Caco-2 (cell line): ENCODE measurements at regions of chr2 and their contacts with region 1.

Region 1: GRCh38 chr2:113080134-113080533 is 12.4 kb downstream of the IL1F10 start:
- DNase-seq: peak in 1 of 2 experiments; percentile 74
- H3K4me3 ChIP-seq: no peak overlapping the region
- H3K4me3 Mint-ChIP-seq: no peak overlapping the region
- H3K27ac Mint-ChIP-seq: no peak overlapping the region
- H3K4me1 ChIP-seq: no peaks in the 10 kb centered on the region
- H3K4me1 Mint-ChIP-seq: no peaks in the 10 kb centered on the region
- H3K27me3 ChIP-seq: no peaks in the 10 kb centered on the region; the same call in 1 of the 2 replicates
- H3K27me3 Mint-ChIP-seq: peaks cover 2% of the 10 kb centered on the region
- CTCF ChIP-seq: peak; percentile 84 to 91

Region 2: DNA sequence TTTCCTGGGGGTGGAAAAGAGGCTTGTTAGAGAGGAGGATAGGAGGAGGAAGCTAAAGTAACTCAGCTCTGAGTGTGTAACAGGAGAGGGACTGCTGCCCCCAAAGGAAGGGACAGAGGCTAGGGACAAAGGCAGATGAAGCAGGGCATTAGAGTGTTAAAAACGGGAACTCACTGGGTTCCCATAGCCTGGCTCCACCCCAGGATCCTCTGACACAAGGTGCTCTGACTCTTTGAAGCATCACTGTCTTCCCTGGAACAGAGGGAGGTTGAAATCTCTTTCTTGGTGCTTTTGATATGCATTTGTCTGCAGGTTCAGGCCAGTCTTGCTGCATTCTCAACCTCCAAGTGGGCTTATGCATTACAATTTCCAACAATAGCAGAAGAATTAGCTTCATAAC is 52.0 kb before region 1 on chr2:
- CTCF ChIA-PET with region 1: no interaction called
- POLR2A ChIA-PET with region 1: no interaction called
- intact Hi-C with region 1: no loop called
- DNase-seq: no peak
- H3K4me3 ChIP-seq: no peak overlapping the region
- H3K4me3 Mint-ChIP-seq: no peak overlapping the region
- H3K27ac Mint-ChIP-seq: no peak overlapping the region
- H3K4me1 ChIP-seq: no peaks in the 10 kb centered on the region
- H3K4me1 Mint-ChIP-seq: no peaks in the 10 kb centered on the region
- H3K27me3 ChIP-seq: peaks cover 5% of the 10 kb centered on the region; the same call in 1 of the 2 replicates
- H3K27me3 Mint-ChIP-seq: peaks cover 28% of the 10 kb centered on the region
- CTCF ChIP-seq: no peak

Region 3: DNA sequence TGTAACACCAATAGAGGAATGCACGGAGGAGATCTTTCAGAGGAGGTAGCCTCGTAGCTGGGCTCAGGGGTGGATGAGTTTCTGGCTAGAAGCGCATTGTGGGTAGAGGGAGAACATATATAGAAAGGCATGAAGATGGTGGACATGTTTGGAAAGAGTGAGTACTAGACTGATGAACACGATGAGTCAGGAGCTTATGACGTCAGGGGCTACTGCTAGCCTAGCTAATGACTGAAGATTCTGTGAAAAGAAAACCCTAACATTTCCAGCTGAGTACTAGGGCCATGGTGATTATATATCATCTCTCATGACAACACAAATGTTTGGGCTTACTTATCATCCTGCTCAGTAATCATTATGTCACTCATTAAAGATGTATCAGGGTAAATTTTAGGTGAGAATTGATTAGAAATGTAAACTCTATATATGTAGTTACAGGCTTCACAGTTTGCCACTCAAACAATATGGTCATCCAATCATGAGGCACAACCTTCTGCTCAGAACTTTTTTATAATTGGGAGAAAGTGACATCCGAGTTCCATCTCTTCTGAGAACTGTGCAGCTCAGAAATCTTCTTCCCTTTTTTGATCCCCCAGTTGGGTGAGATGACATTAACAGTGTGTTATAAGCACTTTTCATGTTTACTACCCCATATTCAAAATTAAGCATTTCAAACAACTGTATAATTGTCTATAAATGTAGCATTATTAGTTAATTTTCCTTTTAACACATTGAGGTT is 25.1 kb after region 1 on chr2:
- CTCF ChIA-PET with region 1: no interaction called
- POLR2A ChIA-PET with region 1: no interaction called
- intact Hi-C with region 1: loop called (anchors 2 kb)
- DNase-seq: no peak
- H3K4me3 ChIP-seq: no peak overlapping the region
- H3K4me3 Mint-ChIP-seq: no peak overlapping the region
- H3K27ac Mint-ChIP-seq: no peak overlapping the region
- H3K4me1 ChIP-seq: peaks cover 5% of the 10 kb centered on the region
- H3K4me1 Mint-ChIP-seq: peaks cover 14% of the 10 kb centered on the region
- H3K27me3 ChIP-seq: no peaks in the 10 kb centered on the region
- H3K27me3 Mint-ChIP-seq: no peaks in the 10 kb centered on the region
- CTCF ChIP-seq: no peak

Region 4: GRCh38 chr2:113157118-113157896 is 77.2 kb after region 1 on chr2:
- CTCF ChIA-PET with region 1: interaction called, 15 read pairs
- POLR2A ChIA-PET with region 1: no interaction called
- intact Hi-C with region 1: no loop called
- DNase-seq: peak; percentile 87 to 88
- H3K4me3 ChIP-seq: peak overlapping the region; percentile 80
- H3K4me3 Mint-ChIP-seq: peak overlapping the region; percentile 75
- H3K27ac Mint-ChIP-seq: peak overlapping the region; percentile 33
- H3K4me1 ChIP-seq: peaks cover 22% of the 10 kb centered on the region
- H3K4me1 Mint-ChIP-seq: peaks cover 5% of the 10 kb centered on the region
- H3K27me3 ChIP-seq: no peaks in the 10 kb centered on the region
- H3K27me3 Mint-ChIP-seq: no peaks in the 10 kb centered on the region
- CTCF ChIP-seq: no peak

Region 5: GRCh38 chr2:113198790-113199612 is 118.9 kb after region 1 on chr2:
- CTCF ChIA-PET with region 1: interaction called, 48 read pairs
- POLR2A ChIA-PET with region 1: no interaction called
- intact Hi-C with region 1: loop called (anchors 1 kb)
- DNase-seq: peak; percentile 90 to 97
- H3K4me3 ChIP-seq: peak overlapping the region; percentile 62
- H3K4me3 Mint-ChIP-seq: peak overlapping the region; percentile 81
- H3K27ac Mint-ChIP-seq: peak overlapping the region; percentile 83
- H3K4me1 ChIP-seq: peaks cover 16% of the 10 kb centered on the region
- H3K4me1 Mint-ChIP-seq: peaks cover 1% of the 10 kb centered on the region
- H3K27me3 ChIP-seq: no peaks in the 10 kb centered on the region
- H3K27me3 Mint-ChIP-seq: no peaks in the 10 kb centered on the region
- CTCF ChIP-seq: peak; percentile 89 to 92

Region 6: GRCh38 chr2:113342650-113343049 is 262.5 kb after region 1 on chr2:
- CTCF ChIA-PET with region 1: no interaction called
- POLR2A ChIA-PET with region 1: no interaction called
- intact Hi-C with region 1: no loop called
- DNase-seq: no peak
- H3K4me3 ChIP-seq: no peak overlapping the region
- H3K4me3 Mint-ChIP-seq: no peak overlapping the region
- H3K27ac Mint-ChIP-seq: no peak overlapping the region
- H3K4me1 ChIP-seq: peaks cover 9% of the 10 kb centered on the region
- H3K4me1 Mint-ChIP-seq: peaks cover 4% of the 10 kb centered on the region
- H3K27me3 ChIP-seq: no peaks in the 10 kb centered on the region
- H3K27me3 Mint-ChIP-seq: no peaks in the 10 kb centered on the region
- CTCF ChIP-seq: no peak

Region 7: DNA sequence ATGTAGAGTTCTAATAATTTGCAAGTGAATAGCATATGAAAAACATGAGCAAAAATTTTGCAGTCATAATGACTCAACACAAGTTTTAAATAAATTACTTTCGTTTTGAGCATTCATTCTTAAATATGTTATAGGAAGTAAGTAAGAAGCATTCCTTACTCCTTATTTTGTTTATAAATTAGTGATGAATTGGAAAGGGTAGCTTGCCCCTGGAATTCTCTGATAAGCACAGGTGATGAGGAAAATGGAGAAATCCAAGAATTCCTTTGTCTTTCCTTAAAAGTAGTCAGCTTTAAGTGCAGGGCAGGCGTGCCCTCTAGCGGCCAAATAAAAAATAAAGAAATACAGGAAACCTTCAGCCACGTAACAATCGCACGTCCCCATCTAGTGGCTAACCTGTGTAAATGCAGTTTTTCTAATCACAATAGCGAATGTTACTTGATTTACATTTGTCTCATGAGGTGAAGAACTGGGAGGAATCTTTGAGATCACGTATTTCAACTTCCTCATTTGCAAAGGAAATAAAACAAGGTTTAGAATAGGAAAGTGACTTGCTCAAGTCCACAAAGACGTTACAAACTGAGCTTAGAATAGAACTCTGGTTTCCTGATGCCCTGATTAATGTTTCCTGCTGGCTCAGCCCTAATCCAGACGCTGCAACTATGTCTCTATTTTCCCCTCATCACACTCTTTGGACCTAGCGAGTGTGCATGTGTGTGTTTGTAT is 310.2 kb after region 1 on chr2:
- CTCF ChIA-PET with region 1: interaction called, 3 read pairs
- POLR2A ChIA-PET with region 1: no interaction called
- intact Hi-C with region 1: loop called (anchors 5 kb)
- DNase-seq: peak; percentile 76 to 84
- H3K4me3 ChIP-seq: no peak overlapping the region
- H3K4me3 Mint-ChIP-seq: no peak overlapping the region
- H3K27ac Mint-ChIP-seq: no peak overlapping the region
- H3K4me1 ChIP-seq: no peaks in the 10 kb centered on the region
- H3K4me1 Mint-ChIP-seq: no peaks in the 10 kb centered on the region
- H3K27me3 ChIP-seq: no peaks in the 10 kb centered on the region
- H3K27me3 Mint-ChIP-seq: no peaks in the 10 kb centered on the region
- CTCF ChIP-seq: peak; percentile 85 to 95